ENCODE measurements at regions of chr14 and their contacts with region 1.

Region 1: GRCh38 chr14:52678591-52678990 is 16.8 kb downstream of the ERO1A start:
- DNase-seq: no peak
- H3K4me3 ChIP-seq: no peak overlapping the region
- H3K27ac ChIP-seq: no peak overlapping the region
- H3K4me1 ChIP-seq: no peaks in the 10 kb centered on the region
- H3K27me3 ChIP-seq: no peaks in the 10 kb centered on the region
- CTCF ChIP-seq: no peak
- POLR2A ChIP-seq: no peak

Region 2: GRCh38 chr14:51424561-51425251 is 1253.9 kb before region 1 on chr14:
- intact Hi-C with region 1: loop called (anchors 5 kb)
- DNase-seq: no peak
- H3K4me3 ChIP-seq: no peak overlapping the region
- H3K27ac ChIP-seq: peak overlapping the region; percentile 50 to 63
- H3K4me1 ChIP-seq: peaks cover 0 to 2% of the 10 kb centered on the region in 2 donors
- H3K27me3 ChIP-seq: no peaks in the 10 kb centered on the region
- CTCF ChIP-seq: no peak
- POLR2A ChIP-seq: no peak

Region 3: DNA sequence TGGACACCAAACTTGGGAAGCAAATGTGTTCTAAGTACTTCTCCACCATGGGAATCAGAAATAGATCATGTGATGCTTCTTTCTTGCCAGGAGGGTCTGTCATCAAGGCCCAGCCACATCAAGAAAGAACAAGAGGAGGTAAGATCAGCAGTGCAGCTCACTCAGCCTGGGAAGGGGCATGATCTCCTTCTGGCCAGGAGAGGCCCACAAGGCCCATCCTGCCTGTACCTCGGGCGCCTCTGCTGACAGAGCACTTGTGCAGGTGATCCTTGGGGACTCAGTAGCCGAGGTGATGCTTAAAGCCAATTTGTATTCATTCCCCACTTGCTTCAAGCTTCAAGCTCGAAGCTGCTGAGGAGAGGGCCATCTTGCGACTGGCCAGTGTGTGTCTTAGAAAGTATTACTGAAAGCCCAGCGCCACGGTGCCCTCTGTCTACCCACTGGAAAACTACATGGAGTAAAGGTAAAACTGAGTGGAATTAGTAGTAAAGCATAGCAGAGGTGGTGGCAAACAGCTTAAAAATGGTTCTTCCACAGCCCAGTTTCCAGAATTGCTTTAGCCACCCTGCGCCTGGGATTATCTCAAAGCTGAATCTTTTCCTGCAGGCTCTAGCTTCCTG is 663.1 kb before region 1 on chr14:
- intact Hi-C with region 1: no loop called
- DNase-seq: no peak
- H3K4me3 ChIP-seq: no peak overlapping the region
- H3K27ac ChIP-seq: no peak overlapping the region
- H3K4me1 ChIP-seq: no peaks in the 10 kb centered on the region
- H3K27me3 ChIP-seq: no peaks in the 10 kb centered on the region
- CTCF ChIP-seq: peak in 1 of 3 donors; percentile 32
- POLR2A ChIP-seq: no peak